Sigmoid colon (tissue), 7 donors: ENCODE measurements at regions of chr5 and their contacts with region 1.

Region 1: DNA sequence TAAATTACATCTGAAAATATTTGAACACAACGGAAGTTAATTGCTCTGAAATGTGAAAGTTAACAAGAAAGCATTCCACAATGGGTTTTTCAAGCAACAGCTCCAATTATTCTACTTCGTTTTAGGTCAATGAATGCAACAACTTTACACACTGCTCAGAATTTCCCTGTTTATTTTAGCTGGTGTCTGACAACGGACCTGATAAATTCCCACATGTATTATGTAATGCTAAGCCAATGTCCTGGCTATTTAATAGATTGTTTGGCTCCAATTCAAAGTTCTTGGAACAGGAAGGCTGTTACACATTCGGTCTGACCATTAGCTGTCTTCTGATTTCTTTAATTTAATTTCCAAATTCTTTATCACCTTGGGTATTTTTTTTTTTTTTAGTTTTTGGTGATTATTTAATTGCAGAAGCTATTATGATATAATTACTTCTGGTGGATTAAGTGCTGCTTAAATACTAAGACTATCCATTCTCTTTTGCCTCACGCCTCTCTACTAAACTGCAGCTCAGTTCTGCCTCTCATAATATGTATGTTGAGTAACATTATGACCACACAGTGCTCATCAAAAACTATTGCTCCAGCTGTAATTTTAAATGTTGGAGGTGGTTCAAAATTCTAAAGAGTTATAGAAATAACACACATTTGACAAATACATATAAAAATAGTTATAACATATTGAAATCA is 57.9 kb downstream of the MEF2C start:
- DNase-seq: no peak
- H3K4me3 ChIP-seq: peak overlapping the region in 3 of 4 donors; percentile 1 to 23 (median 5)
- H3K27ac ChIP-seq: peak overlapping the region; percentile 43 to 72 (median 62)
- H3K4me1 ChIP-seq: peaks cover 0 to 43% (median 34%) of the 10 kb centered on the region in 4 donors
- H3K27me3 ChIP-seq: no peaks in the 10 kb centered on the region
- CTCF ChIP-seq: no peak
- EP300 ChIP-seq: no peak
- POLR2A ChIP-seq: no peak

Region 2: DNA sequence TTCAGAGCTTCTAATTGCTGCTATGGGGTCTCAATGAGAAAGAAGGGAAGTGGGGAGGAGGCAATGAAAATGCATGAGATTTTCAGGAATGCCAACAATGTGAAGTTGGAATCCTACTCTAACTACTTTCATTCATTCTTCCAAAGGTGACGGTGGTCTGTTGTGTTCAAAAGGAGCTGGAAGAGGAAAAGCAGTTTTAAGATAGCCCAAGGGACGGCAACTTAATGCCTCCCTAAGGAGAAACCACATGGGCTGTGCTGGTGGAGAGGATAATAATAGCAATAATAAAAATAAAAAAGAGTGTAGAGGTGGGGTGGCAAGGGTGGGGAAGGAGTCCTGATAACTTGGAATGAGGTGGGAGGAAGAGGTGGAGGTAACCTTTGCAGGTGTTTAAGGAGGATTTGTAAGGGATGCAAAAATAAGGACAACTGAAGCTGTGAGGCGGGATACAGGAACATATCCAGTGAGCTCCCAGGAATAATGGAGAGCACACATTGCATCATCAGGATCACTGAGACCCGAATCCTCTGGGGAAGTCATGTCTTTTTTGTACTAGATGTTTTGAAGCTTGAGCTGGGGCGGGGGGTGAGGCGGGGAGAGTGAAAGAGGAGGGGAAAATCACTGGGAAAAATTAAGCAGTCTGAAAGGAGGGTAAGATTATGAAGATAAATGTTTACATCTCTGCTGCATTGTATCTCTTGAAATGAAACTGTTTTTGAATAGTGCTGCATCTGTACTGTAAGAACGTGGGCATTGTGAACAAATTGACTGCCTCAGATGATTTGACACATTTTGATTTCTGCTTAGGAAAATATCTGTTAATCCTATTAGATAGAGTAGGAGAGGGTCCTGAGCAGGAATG is 436.3 kb before region 1 on chr5:
- intact Hi-C with region 1: no loop called
- DNase-seq: no peak
- H3K4me3 ChIP-seq: no peak overlapping the region
- H3K27ac ChIP-seq: no peak overlapping the region
- H3K4me1 ChIP-seq: no peaks in the 10 kb centered on the region
- H3K27me3 ChIP-seq: no peaks in the 10 kb centered on the region
- CTCF ChIP-seq: no peak
- EP300 ChIP-seq: no peak
- POLR2A ChIP-seq: no peak

Region 3: DNA sequence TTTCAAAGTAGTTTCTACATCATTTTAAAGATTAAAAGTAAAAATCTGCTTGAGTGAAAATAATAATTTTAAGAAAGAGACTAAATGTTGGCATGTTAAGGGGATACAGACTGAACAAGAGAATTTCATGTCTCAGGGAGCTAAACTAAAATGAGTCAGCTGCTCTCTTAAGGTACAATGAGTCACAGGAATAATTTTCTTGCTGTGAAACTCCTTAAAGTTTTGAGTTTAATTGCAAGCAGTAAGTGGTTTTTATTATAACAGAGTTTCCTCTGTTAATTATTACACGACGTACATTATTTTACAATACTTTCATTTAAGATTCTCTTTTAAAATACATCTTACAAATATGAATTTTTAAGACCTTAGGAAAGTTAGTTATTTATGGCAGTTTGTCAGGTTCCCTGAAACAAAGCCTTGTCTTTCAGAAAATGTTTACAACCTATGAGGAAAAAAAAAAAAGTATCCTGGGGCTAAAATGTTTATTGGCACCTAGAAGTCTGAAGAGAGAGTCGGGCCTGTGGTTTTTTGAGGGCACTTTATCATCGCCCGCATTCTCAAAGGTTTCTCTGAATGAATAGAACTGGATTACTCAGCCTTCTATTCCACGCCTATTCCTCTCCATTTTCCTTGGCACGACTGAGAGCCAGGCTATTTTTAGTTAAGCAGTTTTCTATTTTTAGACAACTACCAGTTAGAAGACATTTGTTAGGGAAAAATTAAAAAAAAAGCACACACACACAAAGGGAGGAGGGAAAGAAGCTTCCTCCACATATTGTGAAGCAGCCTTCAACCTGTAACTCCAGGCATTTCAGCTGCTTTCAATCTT is 39.4 kb before region 1 on chr5:
- intact Hi-C with region 1: loop called (anchors 5 kb)
- DNase-seq: peak; percentile 64
- H3K4me3 ChIP-seq: peak overlapping the region in 1 of 4 donors; percentile 12
- H3K27ac ChIP-seq: peak overlapping the region; percentile 54 to 84 (median 75)
- H3K4me1 ChIP-seq: peaks cover 0 to 24% (median 23%) of the 10 kb centered on the region in 4 donors
- H3K27me3 ChIP-seq: no peaks in the 10 kb centered on the region
- CTCF ChIP-seq: no peak
- EP300 ChIP-seq: peak in 1 of 4 donors; percentile 10
- POLR2A ChIP-seq: no peak